ENCODE measurements at regions of chr9 and their contacts with region 1.

Region 1: GRCh38 chr9:120928483-120929228 is 2.1 kb upstream of the TRAF1 start:
- DNase-seq: peak; percentile 83
- ATAC-seq: peak; percentile 60
- H3K4me3 ChIP-seq: peak overlapping the region in 4 of 5 experiments; percentile 56 to 82 (median 72)
- H3K4me3 Mint-ChIP-seq: peak overlapping the region; percentile 81
- H3K27ac ChIP-seq: peak overlapping the region; percentile 90 to 99
- H3K27ac Mint-ChIP-seq: peak overlapping the region; percentile 89
- H3K4me1 ChIP-seq: peaks cover 75 to 89% of the 10 kb centered on the region in 2 donors
- H3K4me1 Mint-ChIP-seq: peaks cover 86% of the 10 kb centered on the region
- H3K27me3 ChIP-seq: no peaks in the 10 kb centered on the region
- H3K27me3 Mint-ChIP-seq: no peaks in the 10 kb centered on the region
- CTCF ChIP-seq: peak; percentile 29

Region 2: DNA sequence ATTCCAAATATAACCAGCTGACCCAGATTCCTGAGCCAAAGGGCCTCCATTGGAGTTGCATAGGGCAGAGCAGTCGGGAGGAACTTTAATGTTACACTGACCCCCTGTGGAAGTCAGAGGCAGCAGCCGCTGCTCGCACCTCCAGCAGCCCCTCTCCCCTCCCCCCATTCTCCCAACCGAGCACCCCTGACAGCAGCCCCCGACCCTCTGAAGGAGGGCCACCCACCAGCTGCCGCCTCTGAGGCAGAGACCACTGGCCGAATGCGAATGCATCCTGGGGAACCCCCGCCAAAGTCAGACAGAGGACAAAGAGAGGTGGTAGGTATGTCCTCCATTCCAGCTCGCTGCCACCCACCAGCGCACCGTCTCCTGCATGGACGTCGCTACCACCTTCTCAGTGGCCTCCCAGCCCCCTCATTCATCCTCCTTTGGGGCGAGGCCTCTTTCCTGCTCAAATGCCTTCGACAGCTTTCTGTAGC is 579.7 kb before region 1 on chr9:
- CTCF ChIA-PET with region 1: no interaction called
- POLR2A ChIA-PET with region 1: no interaction called
- intact Hi-C with region 1: no loop called
- DNase-seq: no peak
- ATAC-seq: no peak
- H3K4me3 ChIP-seq: no peak overlapping the region
- H3K4me3 Mint-ChIP-seq: no peak overlapping the region
- H3K27ac ChIP-seq: no peak overlapping the region
- H3K27ac Mint-ChIP-seq: no peak overlapping the region
- H3K4me1 ChIP-seq: no peaks in the 10 kb centered on the region
- H3K4me1 Mint-ChIP-seq: no peaks in the 10 kb centered on the region
- H3K27me3 ChIP-seq: no peaks in the 10 kb centered on the region
- H3K27me3 Mint-ChIP-seq: no peaks in the 10 kb centered on the region
- CTCF ChIP-seq: peak; percentile 22

Region 3: GRCh38 chr9:120579750-120580590 is 348.7 kb before region 1 on chr9 and contains the start of gene CDK5RAP2:
- CTCF ChIA-PET with region 1: no interaction called
- POLR2A ChIA-PET with region 1: no interaction called
- intact Hi-C with region 1: loop called (anchors 5 kb)
- DNase-seq: peak; percentile 94
- ATAC-seq: peak; percentile 92
- H3K4me3 ChIP-seq: peak within 1 kb of the TSS; percentile 70 to 92 (median 86)
- H3K4me3 Mint-ChIP-seq: peak within 1 kb of the TSS; percentile 94
- H3K27ac ChIP-seq: peak within 1 kb of the TSS; percentile 77 to 78
- H3K27ac Mint-ChIP-seq: peak within 1 kb of the TSS; percentile 93
- H3K4me1 ChIP-seq: peaks cover 27 to 31% of the 10 kb centered on the region in 2 donors
- H3K4me1 Mint-ChIP-seq: peaks cover 53% of the 10 kb centered on the region
- H3K27me3 ChIP-seq: no peaks in the 10 kb centered on the region
- H3K27me3 Mint-ChIP-seq: no peaks in the 10 kb centered on the region
- CTCF ChIP-seq: no peak
- total RNA-seq, gene CDK5RAP2: 116 and 122 TPM in 2 replicates

Region 4: DNA sequence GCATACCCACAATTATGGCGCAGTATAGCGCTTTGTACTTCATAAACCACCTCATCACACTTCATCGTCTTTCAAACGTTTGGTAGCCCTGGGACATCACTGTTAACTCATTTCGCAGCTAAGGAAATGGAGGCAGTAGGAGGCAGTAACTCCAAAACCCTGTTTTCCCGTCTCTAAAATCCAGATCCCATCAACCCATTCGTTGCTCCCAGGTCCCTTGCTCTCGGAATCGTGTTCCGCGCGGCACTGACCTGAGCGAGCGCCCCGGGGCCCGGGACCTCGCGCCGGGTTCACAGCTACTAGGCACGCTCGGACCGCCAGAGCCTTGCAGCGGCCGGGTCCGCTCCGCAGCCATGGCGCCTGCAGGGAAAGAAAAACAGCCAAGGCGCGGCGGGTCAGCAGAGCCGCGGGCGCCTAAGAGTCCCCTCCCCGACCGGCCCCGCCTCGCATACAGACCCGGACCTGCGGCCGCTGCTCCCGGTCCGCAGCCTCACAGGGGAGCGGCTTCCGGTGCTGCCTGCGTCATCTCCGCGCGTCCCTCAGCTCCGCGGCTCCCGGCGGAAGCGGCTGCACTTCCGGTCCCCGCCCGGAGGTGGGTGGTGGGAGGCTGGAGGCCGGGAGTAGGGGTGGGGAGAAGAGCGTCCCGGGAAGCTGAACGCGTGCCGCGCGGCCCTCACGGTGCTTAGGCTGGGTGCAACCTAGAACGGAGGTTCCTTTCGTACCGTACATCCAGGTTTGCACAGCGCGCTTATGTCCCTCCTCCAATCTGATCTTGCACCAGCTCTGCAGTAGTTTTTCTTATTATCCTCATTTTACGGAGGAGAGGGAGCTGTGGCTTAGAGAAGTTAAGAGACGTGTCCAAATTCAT is 135.5 kb before region 1 on chr9 and contains the start of gene FBXW2:
- CTCF ChIA-PET with region 1: no interaction called
- POLR2A ChIA-PET with region 1: interaction called, 5 read pairs
- intact Hi-C with region 1: loop called (anchors 2 kb)
- DNase-seq: peak; percentile 88
- ATAC-seq: peak; percentile 94
- H3K4me3 ChIP-seq: peak within 1 kb of the TSS; percentile 73 to 96 (median 89)
- H3K4me3 Mint-ChIP-seq: peak within 1 kb of the TSS; percentile 92
- H3K27ac ChIP-seq: peak within 1 kb of the TSS; percentile 77 to 87
- H3K27ac Mint-ChIP-seq: peak within 1 kb of the TSS; percentile 92
- H3K4me1 ChIP-seq: peaks cover 18 to 25% of the 10 kb centered on the region in 2 donors
- H3K4me1 Mint-ChIP-seq: peaks cover 38% of the 10 kb centered on the region
- H3K27me3 ChIP-seq: no peaks in the 10 kb centered on the region
- H3K27me3 Mint-ChIP-seq: no peaks in the 10 kb centered on the region
- CTCF ChIP-seq: no peak
- total RNA-seq, gene FBXW2: 70.6 and 73.3 TPM in 2 replicates

Region 5: DNA sequence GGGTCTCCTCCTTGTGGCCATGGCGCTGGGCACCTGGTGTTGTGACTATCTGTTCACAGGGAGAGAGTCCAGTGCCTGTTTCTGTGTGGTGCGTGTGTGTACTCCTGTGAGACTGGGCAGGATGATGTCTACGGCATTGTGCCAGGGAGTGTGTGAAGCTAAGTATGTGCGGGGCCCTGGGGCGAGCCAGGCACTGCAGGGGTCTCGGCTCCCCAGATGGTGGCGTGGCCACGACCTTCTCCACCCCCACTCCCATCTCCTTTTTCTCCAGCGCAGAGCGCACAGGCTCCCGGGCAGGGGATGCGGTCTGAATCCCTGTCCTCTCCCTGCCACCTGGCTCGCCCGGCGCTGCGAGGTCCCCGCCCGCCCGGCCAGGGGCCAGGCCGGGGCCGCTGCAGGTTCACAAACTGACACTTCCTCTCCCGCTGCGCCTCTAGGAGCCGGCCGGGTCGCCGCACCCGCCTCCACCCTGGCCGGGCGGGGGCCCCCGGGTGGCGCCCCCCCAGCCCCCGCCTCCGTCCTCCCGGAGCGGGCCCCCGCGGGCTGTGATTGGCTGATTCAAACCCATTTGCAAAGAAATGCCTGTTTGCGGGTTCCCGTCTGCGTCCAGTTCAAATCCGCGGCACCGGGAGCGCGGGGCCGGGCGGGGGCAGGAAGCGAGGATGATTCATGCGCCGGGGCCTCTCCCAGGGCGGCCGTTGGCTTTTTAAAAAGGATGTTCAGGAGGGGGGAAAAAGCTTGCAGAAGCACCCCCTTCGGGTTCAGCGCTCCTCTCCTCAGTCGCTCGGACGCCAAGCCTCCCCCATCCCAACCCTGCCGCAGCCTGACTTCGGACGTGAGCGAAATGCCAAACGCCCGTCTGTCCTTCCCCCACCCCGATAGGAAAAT is 52.5 kb before region 1 on chr9:
- CTCF ChIA-PET with region 1: interaction called, 102 read pairs
- POLR2A ChIA-PET with region 1: interaction called, 5 read pairs
- intact Hi-C with region 1: loop called (anchors 1 kb)
- DNase-seq: peak; percentile 77
- ATAC-seq: peak; percentile 72
- H3K4me3 ChIP-seq: peak overlapping the region; percentile 45 to 83 (median 70)
- H3K4me3 Mint-ChIP-seq: peak overlapping the region; percentile 86
- H3K27ac ChIP-seq: peak overlapping the region; percentile 69 to 71
- H3K27ac Mint-ChIP-seq: peak overlapping the region; percentile 80
- H3K4me1 ChIP-seq: peaks cover 27 to 33% of the 10 kb centered on the region in 2 donors
- H3K4me1 Mint-ChIP-seq: peaks cover 39% of the 10 kb centered on the region
- H3K27me3 ChIP-seq: peaks cover 0 to 3% (median 0%) of the 10 kb centered on the region in 4 experiments
- H3K27me3 Mint-ChIP-seq: peaks cover 9% of the 10 kb centered on the region
- CTCF ChIP-seq: peak; percentile 15

Region 6: GRCh38 chr9:120892748-120893610 is 35.7 kb before region 1 on chr9:
- CTCF ChIA-PET with region 1: interaction called, 10 read pairs
- POLR2A ChIA-PET with region 1: interaction called, 14 read pairs
- intact Hi-C with region 1: loop called (anchors 1 kb)
- DNase-seq: peak; percentile 79
- ATAC-seq: peak; percentile 88
- H3K4me3 ChIP-seq: peak overlapping the region in 1 of 5 experiments; percentile 13
- H3K4me3 Mint-ChIP-seq: peak overlapping the region; percentile 71
- H3K27ac ChIP-seq: peak overlapping the region; percentile 51 to 65
- H3K27ac Mint-ChIP-seq: peak overlapping the region; percentile 79
- H3K4me1 ChIP-seq: peaks cover 48 to 49% of the 10 kb centered on the region in 2 donors
- H3K4me1 Mint-ChIP-seq: peaks cover 50% of the 10 kb centered on the region
- H3K27me3 ChIP-seq: no peaks in the 10 kb centered on the region
- H3K27me3 Mint-ChIP-seq: no peaks in the 10 kb centered on the region
- CTCF ChIP-seq: no peak

Region 7: GRCh38 chr9:120944434-120944843 is 15.8 kb after region 1 on chr9:
- CTCF ChIA-PET with region 1: no interaction called
- POLR2A ChIA-PET with region 1: interaction called, 3 read pairs
- intact Hi-C with region 1: loop called (anchors 1 kb)
- DNase-seq: peak; percentile 86
- ATAC-seq: peak; percentile 99
- H3K4me3 ChIP-seq: no peak overlapping the region
- H3K4me3 Mint-ChIP-seq: peak overlapping the region; percentile 4
- H3K27ac ChIP-seq: peak overlapping the region; percentile 50 to 65
- H3K27ac Mint-ChIP-seq: peak overlapping the region; percentile 69
- H3K4me1 ChIP-seq: peaks cover 14 to 22% of the 10 kb centered on the region in 2 donors
- H3K4me1 Mint-ChIP-seq: peaks cover 17% of the 10 kb centered on the region
- H3K27me3 ChIP-seq: no peaks in the 10 kb centered on the region
- H3K27me3 Mint-ChIP-seq: no peaks in the 10 kb centered on the region
- CTCF ChIP-seq: no peak

Region 8: GRCh38 chr9:121048618-121049017 is 120.0 kb after region 1 on chr9:
- CTCF ChIA-PET with region 1: no interaction called
- POLR2A ChIA-PET with region 1: no interaction called
- intact Hi-C with region 1: no loop called
- DNase-seq: no peak
- ATAC-seq: no peak
- H3K4me3 ChIP-seq: no peak overlapping the region
- H3K4me3 Mint-ChIP-seq: no peak overlapping the region
- H3K27ac ChIP-seq: no peak overlapping the region
- H3K27ac Mint-ChIP-seq: no peak overlapping the region
- H3K4me1 ChIP-seq: no peaks in the 10 kb centered on the region
- H3K4me1 Mint-ChIP-seq: no peaks in the 10 kb centered on the region
- H3K27me3 ChIP-seq: no peaks in the 10 kb centered on the region
- H3K27me3 Mint-ChIP-seq: no peaks in the 10 kb centered on the region
- CTCF ChIP-seq: no peak

Region 9: GRCh38 chr9:121098567-121099198 is 170.0 kb after region 1 on chr9:
- CTCF ChIA-PET with region 1: no interaction called
- POLR2A ChIA-PET with region 1: no interaction called
- intact Hi-C with region 1: no loop called
- DNase-seq: peak; percentile 73
- ATAC-seq: peak; percentile 99
- H3K4me3 ChIP-seq: no peak overlapping the region
- H3K4me3 Mint-ChIP-seq: peak overlapping the region; percentile 0
- H3K27ac ChIP-seq: peak overlapping the region; percentile 28 to 68
- H3K27ac Mint-ChIP-seq: peak overlapping the region; percentile 46
- H3K4me1 ChIP-seq: peaks cover 14 to 15% of the 10 kb centered on the region in 2 donors
- H3K4me1 Mint-ChIP-seq: peaks cover 18% of the 10 kb centered on the region
- H3K27me3 ChIP-seq: no peaks in the 10 kb centered on the region
- H3K27me3 Mint-ChIP-seq: no peaks in the 10 kb centered on the region
- CTCF ChIP-seq: no peak